ENCODE measurements at regions of chr5 and their contacts with region 1.

Region 1: GRCh38 chr5:160390787-160391696 is 8.8 kb downstream of the FAM200C start:
- DNase-seq: no peak
- ATAC-seq: peak; percentile 69
- H3K4me3 ChIP-seq: no peak overlapping the region
- H3K27ac ChIP-seq: no peak overlapping the region
- H3K4me1 ChIP-seq: no peaks in the 10 kb centered on the region
- H3K27me3 ChIP-seq: no peaks in the 10 kb centered on the region
- CTCF ChIP-seq: peak; percentile 22 to 62 (median 30); a peak in 4 of 6 replicates
- EP300 ChIP-seq: no peak
- POLR2A ChIP-seq: no peak
- RAD21 ChIP-seq: peak; percentile 37; the same call in 1 of the 2 replicates

Region 2: GRCh38 chr5:160199410-160199911 is 191.6 kb before region 1 on chr5:
- CTCF ChIA-PET with region 1: interaction called, 8 read pairs
- POLR2A ChIA-PET with region 1: no interaction called
- RAD21 ChIA-PET with region 1: interaction called, 5 read pairs
- SMC1A ChIA-PET with region 1: interaction called, 4 read pairs
- in situ Hi-C with region 1: no loop called
- intact Hi-C with region 1: loop called (anchors 2 kb)
- DNase-seq: no peak
- ATAC-seq: peak; percentile 99
- H3K4me3 ChIP-seq: peak overlapping the region; percentile 45; the same call in 1 of the 2 replicates
- H3K27ac ChIP-seq: no peak overlapping the region
- H3K4me1 ChIP-seq: peaks cover 8% of the 10 kb centered on the region; the same call in 1 of the 2 replicates
- H3K27me3 ChIP-seq: no peaks in the 10 kb centered on the region
- CTCF ChIP-seq: peak; percentile 74 to 85 (median 83); a peak in 5 of 6 replicates
- EP300 ChIP-seq: no peak
- POLR2A ChIP-seq: no peak
- RAD21 ChIP-seq: peak; percentile 90

Region 3: GRCh38 chr5:160379511-160379910 is 11.5 kb before region 1 on chr5:
- CTCF ChIA-PET with region 1: interaction called, 12 read pairs
- POLR2A ChIA-PET with region 1: no interaction called
- RAD21 ChIA-PET with region 1: interaction called, 4 read pairs
- SMC1A ChIA-PET with region 1: interaction called, 42 read pairs
- in situ Hi-C with region 1: no loop called
- intact Hi-C with region 1: no loop called
- DNase-seq: no peak
- ATAC-seq: no peak
- H3K4me3 ChIP-seq: no peak overlapping the region
- H3K27ac ChIP-seq: no peak overlapping the region
- H3K4me1 ChIP-seq: no peaks in the 10 kb centered on the region
- H3K27me3 ChIP-seq: peaks cover 0 to 5% of the 10 kb centered on the region in 2 experiments; a peak in 1 of 4 replicates
- CTCF ChIP-seq: no peak
- EP300 ChIP-seq: no peak
- POLR2A ChIP-seq: no peak
- RAD21 ChIP-seq: no peak

Measured in GM12878 (cell line).